Breast epithelium (tissue), 4 donors: ENCODE measurements at regions of chr5 and their contacts with region 1.

Region 1: DNA sequence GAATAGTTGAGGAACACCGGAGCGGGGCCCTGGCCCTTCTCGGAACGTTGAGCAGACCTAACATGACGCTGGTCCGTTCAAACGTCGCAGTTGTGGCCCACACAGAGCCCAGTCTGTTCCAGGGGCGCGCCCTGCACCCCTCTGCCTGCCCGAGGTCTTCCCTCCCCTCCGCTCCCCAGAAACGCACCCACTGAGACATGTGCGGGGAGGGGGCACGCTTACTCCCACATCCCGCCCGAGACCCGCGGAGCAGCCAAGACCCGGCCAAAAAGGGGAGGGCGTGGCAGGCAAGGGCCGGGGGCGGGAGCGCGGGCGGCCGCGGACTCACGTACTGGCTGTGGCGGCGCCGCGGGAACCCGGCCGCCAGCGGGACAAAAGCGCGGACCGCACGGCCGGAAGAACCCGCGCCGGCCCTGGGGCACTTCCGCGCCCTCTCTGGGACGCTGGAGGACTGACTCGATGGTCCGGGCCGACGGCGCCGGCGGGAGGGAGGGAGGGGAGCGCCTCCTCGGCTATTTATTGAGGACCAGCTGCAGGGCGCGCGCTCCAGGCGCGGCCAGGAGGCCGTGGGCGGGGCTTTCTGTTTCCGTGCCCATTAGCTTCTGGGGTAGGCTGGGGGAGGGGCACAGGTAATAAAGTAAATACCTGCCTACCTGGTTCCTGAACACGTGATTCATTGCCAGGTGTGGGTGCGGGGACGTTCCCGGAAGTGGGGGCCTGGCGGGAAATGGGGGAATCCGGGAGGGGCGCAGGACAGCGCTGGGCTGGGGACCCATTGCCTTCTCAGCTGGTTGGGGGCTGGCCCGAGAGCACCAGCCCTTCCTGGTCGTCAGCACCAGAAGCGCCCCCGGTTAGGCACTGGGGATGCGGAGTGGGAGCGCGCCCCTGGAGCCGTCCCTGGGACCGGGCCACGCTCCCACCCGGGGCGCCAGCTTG is at the start of gene ZFP62:
- DNase-seq: peak; percentile 71 to 84
- H3K4me3 ChIP-seq: peak within 1 kb of the TSS; percentile 85 to 100 (median 93)
- H3K27ac ChIP-seq: peak within 1 kb of the TSS; percentile 92 to 95
- H3K4me1 ChIP-seq: no peaks in the 10 kb centered on the region
- H3K27me3 ChIP-seq: no peaks in the 10 kb centered on the region
- CTCF ChIP-seq: no peak
- POLR2A ChIP-seq: no peak
- total RNA-seq, gene ZFP62: 18.6 to 49.6 (median 35.4) TPM

Region 2: GRCh38 chr5:180784497-180785097 is 76.6 kb before region 1 on chr5:
- intact Hi-C with region 1: loop called (anchors 10 kb)
- DNase-seq: peak; percentile 70 to 73
- H3K4me3 ChIP-seq: no peak overlapping the region
- H3K27ac ChIP-seq: no peak overlapping the region
- H3K4me1 ChIP-seq: peaks cover 20 to 23% of the 10 kb centered on the region in 2 donors
- H3K27me3 ChIP-seq: no peaks in the 10 kb centered on the region
- CTCF ChIP-seq: peak in 2 of 3 donors; percentile 70 to 76
- POLR2A ChIP-seq: no peak

Region 3: DNA sequence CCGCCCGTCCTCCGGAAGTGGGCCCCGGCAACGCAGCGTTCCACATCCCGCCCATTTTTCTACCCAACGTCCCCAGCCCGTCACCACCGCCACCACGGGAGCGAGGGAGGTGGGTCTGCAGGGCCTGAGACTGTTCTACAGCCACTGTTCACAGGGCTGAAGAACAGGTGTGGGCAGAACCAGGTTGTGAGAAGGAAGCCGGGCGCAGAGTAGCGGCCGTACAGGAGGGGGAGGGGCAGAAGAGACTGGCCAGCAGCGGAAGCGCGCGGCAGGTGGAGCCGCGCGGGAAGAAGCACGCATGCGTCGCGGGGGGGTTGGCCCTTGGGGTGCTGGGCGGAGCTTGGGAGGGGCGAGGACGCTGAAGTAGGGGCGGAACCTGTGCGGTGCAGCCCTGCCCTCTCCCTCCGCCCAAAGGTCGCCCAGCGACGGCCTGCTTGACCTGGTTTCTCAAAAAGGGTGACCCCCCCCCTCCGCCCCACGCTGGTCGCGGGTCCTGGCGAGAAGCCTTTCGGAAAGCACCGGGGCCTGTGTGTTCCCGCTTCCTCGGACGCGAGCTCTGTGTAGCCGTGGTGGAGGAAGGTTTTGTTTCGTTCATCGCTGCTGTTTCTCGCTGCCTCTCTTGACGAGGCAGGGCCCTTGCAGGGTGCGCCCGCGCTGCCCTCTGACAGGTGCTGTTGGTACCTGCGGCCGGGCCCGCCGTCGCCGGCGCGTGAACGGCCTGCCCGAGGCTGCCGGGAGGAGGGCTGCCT is 50.8 kb before region 1 on chr5:
- intact Hi-C with region 1: loop called (anchors 2 kb)
- DNase-seq: peak; percentile 94 to 96
- H3K4me3 ChIP-seq: peak overlapping the region; percentile 63 to 79 (median 71)
- H3K27ac ChIP-seq: peak overlapping the region; percentile 99
- H3K4me1 ChIP-seq: peaks cover 17 to 46% of the 10 kb centered on the region in 2 donors
- H3K27me3 ChIP-seq: no peaks in the 10 kb centered on the region
- CTCF ChIP-seq: peak in 1 of 3 donors; percentile 16
- POLR2A ChIP-seq: peak; percentile 67

Region 4: GRCh38 chr5:180885872-180886418 is 24.8 kb after region 1 on chr5:
- intact Hi-C with region 1: loop called (anchors 2 kb)
- DNase-seq: no peak
- H3K4me3 ChIP-seq: no peak overlapping the region
- H3K27ac ChIP-seq: no peak overlapping the region
- H3K4me1 ChIP-seq: no peaks in the 10 kb centered on the region
- H3K27me3 ChIP-seq: no peaks in the 10 kb centered on the region
- CTCF ChIP-seq: no peak
- POLR2A ChIP-seq: no peak